PC-3 (cell line): ENCODE measurements at regions of chr11 and their contacts with region 1.

Region 1: GRCh38 chr11:111230122-111230465 is 15.4 kb upstream of the POU2AF2 start:
- DNase-seq: no peak
- ATAC-seq: peak; percentile 64
- H3K4me3 ChIP-seq: peak overlapping the region; percentile 77; the same call in 1 of the 2 replicates
- H3K27ac ChIP-seq: no peak overlapping the region
- H3K4me1 ChIP-seq: no peaks in the 10 kb centered on the region
- H3K27me3 ChIP-seq: peaks cover 12% of the 10 kb centered on the region
- CTCF ChIP-seq: no peak

Region 2: GRCh38 chr11:110447897-110448745 is 782.0 kb before region 1 on chr11:
- CTCF ChIA-PET with region 1: no interaction called
- POLR2A ChIA-PET with region 1: no interaction called
- intact Hi-C with region 1: loop called (anchors 1 kb)
- DNase-seq: peak; percentile 88
- ATAC-seq: peak; percentile 49; the same call in 1 of the 2 replicates
- H3K4me3 ChIP-seq: no peak overlapping the region
- H3K27ac ChIP-seq: peak overlapping the region; percentile 79
- H3K4me1 ChIP-seq: peaks cover 21% of the 10 kb centered on the region
- H3K27me3 ChIP-seq: no peaks in the 10 kb centered on the region
- CTCF ChIP-seq: peak; percentile 90

Region 3: GRCh38 chr11:110463153-110463552 is 766.9 kb before region 1 on chr11:
- CTCF ChIA-PET with region 1: no interaction called
- POLR2A ChIA-PET with region 1: no interaction called
- intact Hi-C with region 1: loop called (anchors 5 kb)
- DNase-seq: peak; percentile 51
- ATAC-seq: peak; percentile 89
- H3K4me3 ChIP-seq: no peak overlapping the region
- H3K27ac ChIP-seq: no peak overlapping the region
- H3K4me1 ChIP-seq: no peaks in the 10 kb centered on the region
- H3K27me3 ChIP-seq: no peaks in the 10 kb centered on the region
- CTCF ChIP-seq: peak; percentile 70

Region 4: GRCh38 chr11:110679323-110679975 is 550.6 kb before region 1 on chr11:
- CTCF ChIA-PET with region 1: no interaction called
- POLR2A ChIA-PET with region 1: no interaction called
- intact Hi-C with region 1: no loop called
- DNase-seq: no peak
- ATAC-seq: no peak
- H3K4me3 ChIP-seq: no peak overlapping the region
- H3K27ac ChIP-seq: no peak overlapping the region
- H3K4me1 ChIP-seq: no peaks in the 10 kb centered on the region
- H3K27me3 ChIP-seq: peaks cover 13% of the 10 kb centered on the region; the same call in 1 of the 2 replicates
- CTCF ChIP-seq: no peak

Region 5: GRCh38 chr11:111123463-111124398 is 106.4 kb before region 1 on chr11:
- CTCF ChIA-PET with region 1: no interaction called
- POLR2A ChIA-PET with region 1: no interaction called
- intact Hi-C with region 1: no loop called
- DNase-seq: no peak
- ATAC-seq: no peak
- H3K4me3 ChIP-seq: no peak overlapping the region
- H3K27ac ChIP-seq: no peak overlapping the region
- H3K4me1 ChIP-seq: no peaks in the 10 kb centered on the region
- H3K27me3 ChIP-seq: peaks cover 24% of the 10 kb centered on the region
- CTCF ChIP-seq: no peak

Region 6: GRCh38 chr11:111155021-111155420 is 75.1 kb before region 1 on chr11:
- CTCF ChIA-PET with region 1: no interaction called
- POLR2A ChIA-PET with region 1: no interaction called
- intact Hi-C with region 1: loop called (anchors 5 kb)
- DNase-seq: no peak
- ATAC-seq: no peak
- H3K4me3 ChIP-seq: no peak overlapping the region
- H3K27ac ChIP-seq: no peak overlapping the region
- H3K4me1 ChIP-seq: no peaks in the 10 kb centered on the region
- H3K27me3 ChIP-seq: peaks cover 45% of the 10 kb centered on the region
- CTCF ChIP-seq: no peak

Region 7: GRCh38 chr11:111206472-111206871 is 23.6 kb before region 1 on chr11:
- CTCF ChIA-PET with region 1: no interaction called
- POLR2A ChIA-PET with region 1: no interaction called
- intact Hi-C with region 1: loop called (anchors 1 kb)
- DNase-seq: peak; percentile 92
- ATAC-seq: peak; percentile 95
- H3K4me3 ChIP-seq: no peak overlapping the region
- H3K27ac ChIP-seq: peak overlapping the region; percentile 70
- H3K4me1 ChIP-seq: peaks cover 26% of the 10 kb centered on the region
- H3K27me3 ChIP-seq: no peaks in the 10 kb centered on the region
- CTCF ChIP-seq: no peak

Region 8: DNA sequence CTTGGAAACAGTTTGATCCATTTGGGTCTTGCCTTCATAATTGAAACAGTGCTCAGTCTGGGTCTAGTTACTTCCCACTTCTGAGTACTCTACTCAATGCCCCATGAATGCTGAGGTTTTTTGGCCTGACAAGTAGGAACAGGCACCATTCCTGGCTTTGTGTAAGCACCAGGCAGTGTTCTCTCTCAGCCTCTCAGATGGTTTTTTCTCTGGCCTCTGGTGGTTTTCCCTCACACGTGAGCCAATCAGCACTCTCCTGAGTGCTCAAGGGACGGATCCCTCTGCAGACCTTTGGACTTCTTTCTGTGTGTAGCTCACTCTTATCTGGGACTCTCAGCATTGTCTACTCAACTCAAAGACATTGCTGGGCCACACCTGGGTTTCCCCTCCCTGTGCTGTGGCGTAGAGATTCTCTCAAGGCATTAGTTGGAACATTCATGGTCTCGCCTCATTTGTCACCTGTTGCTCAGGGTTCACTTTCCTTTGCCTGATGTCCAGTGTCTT is 393.5 kb after region 1 on chr11:
- CTCF ChIA-PET with region 1: no interaction called
- POLR2A ChIA-PET with region 1: no interaction called
- intact Hi-C with region 1: no loop called
- DNase-seq: no peak
- ATAC-seq: no peak
- H3K4me3 ChIP-seq: no peak overlapping the region
- H3K27ac ChIP-seq: no peak overlapping the region
- H3K4me1 ChIP-seq: no peaks in the 10 kb centered on the region
- H3K27me3 ChIP-seq: no peaks in the 10 kb centered on the region
- CTCF ChIP-seq: no peak